PC-3 (cell line): ENCODE measurements at regions of chr1 and their contacts with region 1.

Region 1: GRCh38 chr1:94169126-94169525 is 48.2 kb upstream of the ABCA4 start:
- DNase-seq: no peak
- ATAC-seq: no peak
- H3K4me3 ChIP-seq: no peak overlapping the region
- H3K27ac ChIP-seq: no peak overlapping the region
- H3K4me1 ChIP-seq: no peaks in the 10 kb centered on the region
- H3K27me3 ChIP-seq: no peaks in the 10 kb centered on the region
- CTCF ChIP-seq: no peak

Region 2: DNA sequence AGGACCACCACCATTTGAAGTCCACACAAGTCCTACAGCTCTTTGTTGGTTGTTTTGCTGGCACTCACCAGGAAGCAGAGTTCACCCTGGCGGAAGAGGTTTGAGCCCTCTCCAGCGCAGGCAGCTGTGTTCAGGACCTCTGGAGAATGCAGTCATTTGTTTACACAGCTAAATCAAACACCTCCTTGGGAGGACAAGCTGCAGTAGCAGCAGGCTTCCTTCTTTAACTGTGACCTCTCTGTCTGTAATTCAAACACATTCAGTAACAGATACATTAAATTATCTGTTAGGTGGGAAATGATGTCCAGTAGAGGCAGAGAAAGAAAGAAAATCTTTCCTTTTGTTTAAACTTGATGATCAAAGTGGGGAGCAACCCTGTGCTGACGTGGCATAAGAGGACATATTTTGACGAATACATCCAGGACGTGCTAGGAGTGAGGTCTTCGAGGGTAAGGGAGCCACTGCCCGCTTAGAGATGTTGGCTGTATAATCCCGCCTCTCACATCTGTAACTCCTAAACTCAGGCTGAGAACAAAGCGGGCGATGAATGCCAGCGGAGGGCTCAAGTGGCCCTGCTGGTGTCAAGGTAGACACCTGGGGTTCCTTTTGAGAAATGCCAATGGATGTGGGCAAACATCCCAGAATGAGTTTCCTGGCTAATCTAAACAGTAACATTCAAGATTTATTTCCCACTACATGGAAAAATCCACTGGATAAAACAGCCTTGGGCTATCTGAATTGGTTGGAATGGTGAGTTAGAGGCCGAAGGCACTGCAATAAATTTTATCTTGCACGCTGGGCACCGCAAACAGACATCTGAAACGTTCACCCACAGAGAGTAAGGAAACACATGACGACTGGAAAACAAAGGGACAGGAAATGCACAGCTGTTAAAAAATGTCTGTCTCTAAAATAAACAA is 99.9 kb before region 1 on chr1:
- CTCF ChIA-PET with region 1: no interaction called
- POLR2A ChIA-PET with region 1: no interaction called
- intact Hi-C with region 1: loop called (anchors 2 kb)
- DNase-seq: peak; percentile 84
- ATAC-seq: peak; percentile 83
- H3K4me3 ChIP-seq: peak overlapping the region; percentile 27; the same call in 1 of the 2 replicates
- H3K27ac ChIP-seq: peak overlapping the region; percentile 80
- H3K4me1 ChIP-seq: peaks cover 45% of the 10 kb centered on the region
- H3K27me3 ChIP-seq: no peaks in the 10 kb centered on the region
- CTCF ChIP-seq: no peak

Region 3: GRCh38 chr1:94154989-94155388 is 14.1 kb before region 1 on chr1:
- CTCF ChIA-PET with region 1: no interaction called
- POLR2A ChIA-PET with region 1: no interaction called
- intact Hi-C with region 1: no loop called
- DNase-seq: no peak
- ATAC-seq: no peak
- H3K4me3 ChIP-seq: no peak overlapping the region
- H3K27ac ChIP-seq: no peak overlapping the region
- H3K4me1 ChIP-seq: no peaks in the 10 kb centered on the region
- H3K27me3 ChIP-seq: no peaks in the 10 kb centered on the region
- CTCF ChIP-seq: no peak

Region 4: GRCh38 chr1:94329986-94330385 is 160.9 kb after region 1 on chr1:
- CTCF ChIA-PET with region 1: no interaction called
- POLR2A ChIA-PET with region 1: no interaction called
- intact Hi-C with region 1: loop called (anchors 2 kb)
- DNase-seq: peak; percentile 31
- ATAC-seq: no peak
- H3K4me3 ChIP-seq: no peak overlapping the region
- H3K27ac ChIP-seq: 0 out of 2 replicates have a peak overlapping the region, but pooled peaks have one; percentile 2
- H3K4me1 ChIP-seq: peaks cover 77% of the 10 kb centered on the region
- H3K27me3 ChIP-seq: no peaks in the 10 kb centered on the region
- CTCF ChIP-seq: peak; percentile 56